ENCODE measurements at regions of chr19 and their contacts with region 1.

Region 1: GRCh38 chr19:2610637-2611482 is 91.6 kb downstream of the GNG7 start:
- DNase-seq: peak; percentile 92
- H3K4me3 ChIP-seq: peak overlapping the region; percentile 26 to 55; a peak in 2 of 4 replicates
- H3K27ac ChIP-seq: peak overlapping the region; percentile 40 to 63; a peak in 3 of 4 replicates
- H3K4me1 ChIP-seq: peaks cover 0 to 2% of the 10 kb centered on the region in 2 experiments; a peak in 1 of 4 replicates
- H3K27me3 ChIP-seq: no peaks in the 10 kb centered on the region
- CTCF ChIP-seq: peak; percentile 94
- EP300 ChIP-seq: no peak
- RAD21 ChIP-seq: peak; percentile 94

Region 2: DNA sequence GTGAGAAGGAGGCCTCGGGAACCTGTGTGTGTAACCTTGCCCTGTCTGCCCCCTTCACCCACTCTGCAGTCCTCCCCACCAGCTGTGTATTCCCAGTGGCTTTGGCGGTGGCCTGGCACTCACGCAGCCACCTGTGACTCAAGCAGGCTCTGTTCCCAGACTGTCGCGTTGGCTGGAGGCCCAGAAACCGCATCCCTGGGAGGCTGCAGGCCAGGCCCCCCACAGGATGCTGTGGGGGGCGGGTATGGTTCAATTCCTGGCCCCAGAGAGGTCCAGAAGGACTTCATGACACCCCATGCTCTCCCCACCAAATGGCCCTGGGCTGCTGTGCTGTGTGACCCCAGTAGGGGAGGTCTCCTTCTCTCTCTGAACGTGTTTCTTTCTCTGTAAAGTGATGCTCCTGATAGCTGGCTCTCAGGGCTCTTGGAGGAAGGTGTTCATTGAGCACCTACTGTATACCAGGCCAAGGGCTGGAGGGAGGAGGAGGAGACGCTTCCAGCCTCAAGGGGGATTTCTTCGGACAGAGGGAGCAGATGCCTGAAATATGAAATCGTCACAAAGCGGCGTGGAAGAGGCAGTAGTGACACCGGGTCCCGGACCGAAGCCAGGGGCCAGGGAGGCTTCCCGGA is 301.0 kb before region 1 on chr19:
- CTCF ChIA-PET with region 1: no interaction called
- POLR2A ChIA-PET with region 1: no interaction called
- DNase-seq: peak; percentile 79
- H3K4me3 ChIP-seq: no peak overlapping the region
- H3K27ac ChIP-seq: no peak overlapping the region
- H3K4me1 ChIP-seq: peaks cover 0 to 16% of the 10 kb centered on the region in 2 experiments; a peak in 1 of 4 replicates
- H3K27me3 ChIP-seq: no peaks in the 10 kb centered on the region; the same call in 1 of the 2 replicates
- CTCF ChIP-seq: no peak
- EP300 ChIP-seq: 0 out of 4 replicates have a peak, but pooled peaks of 1 of the 2 experiments have one; percentile 18
- RAD21 ChIP-seq: no peak

Region 3: GRCh38 chr19:2543463-2544442 is 67.1 kb before region 1 on chr19:
- CTCF ChIA-PET with region 1: interaction called, 19 read pairs
- POLR2A ChIA-PET with region 1: no interaction called
- DNase-seq: peak; percentile 91
- H3K4me3 ChIP-seq: peak overlapping the region; percentile 7 to 22; a peak in 2 of 4 replicates
- H3K27ac ChIP-seq: peak overlapping the region; percentile 86 to 90
- H3K4me1 ChIP-seq: peaks cover 13 to 43% of the 10 kb centered on the region in 2 experiments; a peak in 3 of 4 replicates
- H3K27me3 ChIP-seq: no peaks in the 10 kb centered on the region
- CTCF ChIP-seq: peak; percentile 41
- EP300 ChIP-seq: peak; percentile 21 to 83; a peak in 1 of 4 replicates
- RAD21 ChIP-seq: peak; percentile 55

Region 4: DNA sequence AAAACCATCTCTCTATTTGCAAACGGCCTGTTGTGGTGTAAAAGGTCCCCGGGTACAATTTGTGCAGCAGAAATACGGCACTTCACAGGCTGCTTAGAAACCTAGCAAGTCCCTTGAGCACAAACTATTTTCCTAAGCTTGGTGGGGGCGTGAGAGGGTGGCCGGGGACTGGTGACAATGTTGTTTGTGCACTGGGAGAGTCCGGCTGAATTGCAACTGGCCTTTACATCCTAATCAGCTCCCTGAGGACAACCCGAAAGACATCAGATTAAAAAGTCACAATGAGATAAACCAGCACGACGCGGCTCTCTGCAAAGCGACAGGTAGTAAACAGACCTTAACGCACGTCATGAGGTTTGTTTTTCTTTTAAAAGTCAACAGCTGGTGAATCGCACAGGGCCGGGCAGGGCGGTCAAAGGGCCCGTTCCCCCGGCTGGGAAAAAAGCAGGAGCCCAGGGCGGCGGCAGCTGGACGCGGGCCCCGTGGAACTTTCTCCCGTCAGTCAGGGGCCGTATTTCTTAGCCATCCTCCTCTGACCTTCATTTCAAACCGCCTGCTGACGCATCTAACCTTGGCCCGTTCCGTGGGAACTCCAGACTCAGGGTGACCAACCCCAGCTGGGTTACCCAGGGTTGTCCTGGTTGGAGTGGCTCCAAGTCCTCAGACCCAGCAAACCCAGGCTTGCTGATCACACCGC is 22.6 kb before region 1 on chr19:
- CTCF ChIA-PET with region 1: interaction called, 11 read pairs
- POLR2A ChIA-PET with region 1: no interaction called
- DNase-seq: no peak
- H3K4me3 ChIP-seq: no peak overlapping the region
- H3K27ac ChIP-seq: no peak overlapping the region
- H3K4me1 ChIP-seq: no peaks in the 10 kb centered on the region
- H3K27me3 ChIP-seq: no peaks in the 10 kb centered on the region
- CTCF ChIP-seq: no peak
- EP300 ChIP-seq: no peak
- RAD21 ChIP-seq: no peak

Region 5: GRCh38 chr19:2627319-2627829 is 16.5 kb after region 1 on chr19:
- CTCF ChIA-PET with region 1: interaction called, 41 read pairs
- POLR2A ChIA-PET with region 1: no interaction called
- DNase-seq: no peak
- H3K4me3 ChIP-seq: no peak overlapping the region
- H3K27ac ChIP-seq: peak overlapping the region in 1 of 2 experiments; percentile 70; a peak in 2 of 4 replicates
- H3K4me1 ChIP-seq: peaks cover 4 to 5% of the 10 kb centered on the region in 2 experiments; a peak in 2 of 4 replicates
- H3K27me3 ChIP-seq: no peaks in the 10 kb centered on the region
- CTCF ChIP-seq: no peak
- EP300 ChIP-seq: peak in 1 of 2 experiments; percentile 72; a peak in 1 of 4 replicates
- RAD21 ChIP-seq: no peak

Region 6: GRCh38 chr19:2636897-2637683 is 26.2 kb after region 1 on chr19:
- CTCF ChIA-PET with region 1: interaction called, 116 read pairs
- POLR2A ChIA-PET with region 1: no interaction called
- DNase-seq: peak; percentile 94
- H3K4me3 ChIP-seq: 0 out of 4 replicates have a peak overlapping the region, but pooled peaks of 1 of the 2 experiments have one; percentile 23
- H3K27ac ChIP-seq: no peak overlapping the region
- H3K4me1 ChIP-seq: peaks cover 0 to 3% of the 10 kb centered on the region in 2 experiments; a peak in 1 of 4 replicates
- H3K27me3 ChIP-seq: no peaks in the 10 kb centered on the region
- CTCF ChIP-seq: peak; percentile 79
- EP300 ChIP-seq: no peak
- RAD21 ChIP-seq: peak; percentile 66

Region 7: GRCh38 chr19:2678043-2678671 is 67.3 kb after region 1 on chr19:
- CTCF ChIA-PET with region 1: no interaction called
- POLR2A ChIA-PET with region 1: no interaction called
- DNase-seq: no peak
- H3K4me3 ChIP-seq: no peak overlapping the region
- H3K27ac ChIP-seq: no peak overlapping the region
- H3K4me1 ChIP-seq: no peaks in the 10 kb centered on the region
- H3K27me3 ChIP-seq: peaks cover 9% of the 10 kb centered on the region; the same call in 1 of the 2 replicates
- CTCF ChIP-seq: no peak
- EP300 ChIP-seq: peak in 1 of 2 experiments; percentile 39; a peak in 1 of 4 replicates
- RAD21 ChIP-seq: no peak

Region 8: GRCh38 chr19:2739602-2740313 is 128.9 kb after region 1 on chr19 and contains the start of gene SLC39A3:
- CTCF ChIA-PET with region 1: no interaction called
- POLR2A ChIA-PET with region 1: no interaction called
- DNase-seq: peak; percentile 100
- H3K4me3 ChIP-seq: peak within 1 kb of the TSS; percentile 84 to 94
- H3K27ac ChIP-seq: no peak within 1 kb of the TSS; a peak in 1 of 4 replicates
- H3K4me1 ChIP-seq: peaks cover 0 to 5% of the 10 kb centered on the region in 2 experiments; a peak in 1 of 4 replicates
- H3K27me3 ChIP-seq: peaks cover 1% of the 10 kb centered on the region; the same call in 1 of the 2 replicates
- CTCF ChIP-seq: no peak
- EP300 ChIP-seq: no peak
- RAD21 ChIP-seq: no peak
- polyA plus RNA-seq, gene SLC39A3: 42.2 and 45.2 TPM in 2 replicates

Measured in SK-N-SH (cell line).